ENCODE measurements at regions of chr2 and their contacts with region 1.

Region 1: DNA sequence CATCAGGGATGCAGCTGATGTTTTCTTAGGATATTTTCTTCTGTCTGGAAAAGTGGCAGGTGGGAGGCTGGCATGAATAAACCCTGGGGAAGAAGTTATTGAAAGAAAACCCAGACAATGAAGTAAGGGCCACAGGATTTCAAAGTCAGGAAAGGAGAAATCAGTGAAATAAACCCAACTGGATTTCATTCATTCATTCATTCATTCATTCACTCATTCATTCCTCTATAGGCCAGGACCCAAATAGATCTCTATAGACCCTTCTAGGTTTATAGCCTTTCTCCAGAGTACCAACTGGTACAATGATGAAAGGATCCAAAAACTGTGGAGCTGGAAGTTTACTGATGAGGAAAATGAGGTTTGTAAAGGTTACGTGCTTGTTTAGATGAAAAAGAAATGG is 67.3 kb upstream of the DNMT3A start:
- DNase-seq: no peak
- H3K27ac ChIP-seq: no peak overlapping the region
- CTCF ChIP-seq: no peak

Region 2: GRCh38 chr2:25388491-25388890 is 20.6 kb before region 1 on chr2:
- CTCF ChIA-PET with region 1: no interaction called
- POLR2A ChIA-PET with region 1: interaction called, 10 read pairs
- DNase-seq: no peak
- H3K27ac ChIP-seq: no peak overlapping the region
- CTCF ChIP-seq: no peak

Region 3: GRCh38 chr2:25794544-25795276 is 385.7 kb after region 1 on chr2:
- CTCF ChIA-PET with region 1: no interaction called
- POLR2A ChIA-PET with region 1: no interaction called
- DNase-seq: no peak
- H3K27ac ChIP-seq: no peak overlapping the region
- CTCF ChIP-seq: no peak